Transverse colon (tissue), 4 donors: ENCODE measurements at regions of chr12 and their contacts with region 1.

Region 1: DNA sequence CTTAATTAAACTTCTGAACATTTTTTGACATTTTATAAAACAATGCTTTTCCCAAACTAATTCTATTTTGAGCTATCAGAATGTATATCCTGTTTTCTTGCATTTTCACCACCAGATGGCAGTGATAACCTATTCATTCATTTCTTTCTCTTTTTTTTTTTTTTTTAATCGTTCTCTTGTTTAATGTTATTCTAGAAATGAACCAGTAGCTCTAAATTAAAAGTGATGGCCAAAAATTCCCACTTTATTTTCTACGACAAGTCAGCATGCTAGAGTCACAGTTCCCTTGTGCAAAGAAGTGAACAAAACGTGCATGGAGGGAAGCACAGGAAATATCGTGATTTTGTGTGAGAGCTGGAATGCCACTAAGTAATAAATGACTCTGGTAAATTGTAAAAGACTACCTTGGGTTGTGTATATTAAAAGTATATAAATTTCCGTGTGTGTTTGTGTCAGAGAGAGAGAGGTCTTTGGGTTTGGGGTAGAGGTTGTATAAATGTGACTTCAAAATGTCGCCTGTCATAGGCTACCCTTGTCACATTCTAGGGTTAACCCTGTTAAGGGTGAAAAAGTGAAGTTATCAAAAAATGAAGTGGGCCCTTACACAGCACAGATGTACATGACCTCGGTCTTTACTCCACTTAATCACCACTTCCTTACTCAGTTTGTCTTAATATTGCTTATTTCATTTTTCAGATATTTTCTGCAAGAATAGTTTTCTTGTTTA is 40.4 kb upstream of the LDHB start:
- DNase-seq: no peak
- H3K4me3 ChIP-seq: no peak overlapping the region
- H3K27ac ChIP-seq: no peak overlapping the region
- H3K4me1 ChIP-seq: peaks cover 0 to 5% (median 2%) of the 10 kb centered on the region in 4 donors
- H3K27me3 ChIP-seq: no peaks in the 10 kb centered on the region
- CTCF ChIP-seq: peak; percentile 62 to 76 (median 72)
- EP300 ChIP-seq: no peak
- POLR2A ChIP-seq: no peak

Region 2: GRCh38 chr12:21989819-21990412 is 291.8 kb after region 1 on chr12:
- in situ Hi-C with region 1: loop called in 1 of 4 experiments (anchors 10 kb)
- intact Hi-C with region 1: loop called (anchors 10 kb)
- DNase-seq: no peak
- H3K4me3 ChIP-seq: no peak overlapping the region
- H3K27ac ChIP-seq: no peak overlapping the region
- H3K4me1 ChIP-seq: peaks cover 0 to 7% (median 1%) of the 10 kb centered on the region in 4 donors
- H3K27me3 ChIP-seq: no peaks in the 10 kb centered on the region
- CTCF ChIP-seq: peak; percentile 30 to 57 (median 47)
- EP300 ChIP-seq: no peak
- POLR2A ChIP-seq: no peak

Region 3: GRCh38 chr12:22002430-22002829 is 304.4 kb after region 1 on chr12:
- in situ Hi-C with region 1: loop called in 2 of 4 experiments (anchors 10 kb)
- intact Hi-C with region 1: no loop called
- DNase-seq: no peak
- H3K4me3 ChIP-seq: no peak overlapping the region
- H3K27ac ChIP-seq: no peak overlapping the region
- H3K4me1 ChIP-seq: no peaks in the 10 kb centered on the region
- H3K27me3 ChIP-seq: no peaks in the 10 kb centered on the region
- CTCF ChIP-seq: no peak
- EP300 ChIP-seq: no peak
- POLR2A ChIP-seq: no peak

Region 4: DNA sequence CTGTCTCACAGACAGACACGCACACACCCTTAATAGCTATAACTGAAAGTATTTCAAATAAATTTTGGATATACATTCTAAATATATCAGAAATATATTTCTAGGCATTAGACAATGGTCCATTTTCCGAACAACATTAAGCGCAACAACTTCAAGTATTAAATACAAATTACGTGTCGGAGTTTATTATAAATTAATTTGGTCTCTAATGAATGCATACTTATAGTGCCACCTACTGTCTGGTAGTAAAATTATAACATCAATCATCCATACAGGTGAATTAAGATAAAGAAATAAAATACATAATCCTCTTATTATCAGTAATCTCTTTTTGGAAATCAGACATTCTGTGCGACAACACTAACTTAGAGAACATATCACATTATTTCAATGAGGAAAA is 320.8 kb after region 1 on chr12:
- in situ Hi-C with region 1: loop called in 2 of 4 experiments (anchors 10 kb)
- intact Hi-C with region 1: loop called (anchors 10 kb)
- DNase-seq: no peak
- H3K4me3 ChIP-seq: no peak overlapping the region
- H3K27ac ChIP-seq: no peak overlapping the region
- H3K4me1 ChIP-seq: no peaks in the 10 kb centered on the region
- H3K27me3 ChIP-seq: no peaks in the 10 kb centered on the region
- CTCF ChIP-seq: peak; percentile 30 to 45 (median 36)
- EP300 ChIP-seq: no peak
- POLR2A ChIP-seq: no peak

Region 5: DNA sequence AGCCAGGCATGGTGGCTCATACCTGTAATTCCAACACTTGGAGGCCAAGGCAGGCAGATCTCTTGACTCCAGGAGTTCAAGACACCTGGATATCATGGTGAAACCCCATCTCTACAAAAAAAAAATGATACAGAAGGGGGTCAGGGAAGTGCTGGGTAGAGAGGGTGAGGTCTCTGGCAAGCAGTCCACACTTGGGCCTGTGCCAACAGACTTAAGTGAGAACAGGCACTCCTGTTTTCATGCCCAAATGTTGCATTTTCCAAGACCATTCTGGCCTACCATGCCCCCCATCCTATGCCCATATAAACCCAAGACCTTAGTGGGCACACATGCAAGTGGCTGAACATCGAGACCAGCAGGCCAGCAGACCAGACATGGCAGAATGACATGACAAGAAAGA is 331.9 kb after region 1 on chr12:
- in situ Hi-C with region 1: loop called in 1 of 4 experiments (anchors 10 kb)
- intact Hi-C with region 1: no loop called
- DNase-seq: no peak
- H3K4me3 ChIP-seq: no peak overlapping the region
- H3K27ac ChIP-seq: no peak overlapping the region
- H3K4me1 ChIP-seq: peaks cover 0 to 11% (median 8%) of the 10 kb centered on the region in 4 donors
- H3K27me3 ChIP-seq: no peaks in the 10 kb centered on the region
- CTCF ChIP-seq: no peak
- EP300 ChIP-seq: no peak
- POLR2A ChIP-seq: no peak

Region 6: DNA sequence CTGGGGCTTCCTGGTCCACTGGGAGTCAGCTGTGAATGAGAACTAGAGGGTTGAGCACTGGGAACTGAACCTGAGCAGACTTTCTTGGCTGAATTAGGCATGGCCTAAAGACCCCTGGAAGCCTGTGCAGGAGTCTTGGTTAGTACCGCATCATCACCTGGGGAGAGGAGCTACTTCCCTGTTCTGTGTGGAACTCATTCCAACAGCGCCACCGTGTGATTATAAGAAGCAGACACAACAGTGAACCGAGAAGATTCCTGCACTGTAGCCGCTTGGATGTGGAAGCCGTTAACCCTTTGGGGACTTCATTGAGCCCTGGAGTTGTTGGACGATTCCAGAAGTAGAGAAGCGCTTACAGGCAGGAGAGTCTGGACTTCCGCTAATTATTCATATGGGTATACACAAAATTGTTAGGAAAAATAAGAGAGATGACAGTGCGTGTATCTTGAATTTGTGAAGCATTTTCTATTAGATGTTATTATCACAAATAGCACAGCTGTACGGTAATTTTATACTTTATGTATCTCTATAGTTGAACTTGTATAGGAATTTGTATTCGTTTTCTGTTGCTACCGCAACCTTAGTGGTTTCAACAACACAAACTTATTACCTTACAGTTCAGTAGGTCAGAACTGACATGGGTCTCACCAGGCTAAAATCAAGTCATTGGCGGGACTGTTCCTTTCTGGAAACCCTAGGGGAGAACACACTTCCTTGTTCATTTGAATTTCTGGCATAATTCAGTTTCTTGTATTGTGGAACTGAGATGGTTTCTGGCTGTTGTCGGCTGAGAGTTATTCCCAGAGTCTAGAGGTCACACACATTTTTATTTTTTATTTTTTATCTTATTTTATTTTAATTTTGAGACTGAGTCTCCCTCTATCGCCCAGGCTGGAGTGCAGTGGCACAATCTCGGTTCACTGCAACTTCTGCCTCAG is 745.6 kb after region 1 on chr12:
- in situ Hi-C with region 1: loop called in 1 of 4 experiments (anchors 25 kb)
- intact Hi-C with region 1: no loop called
- DNase-seq: peak; percentile 54
- H3K4me3 ChIP-seq: no peak overlapping the region
- H3K27ac ChIP-seq: no peak overlapping the region
- H3K4me1 ChIP-seq: no peaks in the 10 kb centered on the region
- H3K27me3 ChIP-seq: no peaks in the 10 kb centered on the region
- CTCF ChIP-seq: peak; percentile 66 to 79 (median 73)
- EP300 ChIP-seq: no peak
- POLR2A ChIP-seq: no peak

Region 7: DNA sequence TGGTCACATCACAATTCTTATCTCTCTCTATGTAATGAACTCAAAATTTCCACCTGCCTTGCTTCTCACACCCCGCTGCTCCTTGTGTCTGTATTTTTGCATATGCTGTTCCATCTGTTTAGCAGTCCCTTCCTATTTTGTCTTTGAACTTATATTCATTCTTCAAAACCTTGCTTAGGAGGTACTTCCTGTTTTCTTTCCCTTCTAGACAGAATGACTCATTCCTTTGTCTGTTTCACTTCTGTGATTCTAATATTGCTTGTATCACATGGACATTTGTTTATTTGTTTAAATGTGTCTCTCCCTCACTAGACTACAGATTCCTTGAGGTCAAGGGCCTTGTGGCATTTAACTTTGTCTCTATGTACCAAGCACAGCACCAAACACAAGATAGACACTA is 1351.1 kb after region 1 on chr12:
- in situ Hi-C with region 1: no loop called
- intact Hi-C with region 1: no loop called
- DNase-seq: no peak
- H3K4me3 ChIP-seq: no peak overlapping the region
- H3K27ac ChIP-seq: no peak overlapping the region
- H3K4me1 ChIP-seq: no peaks in the 10 kb centered on the region
- H3K27me3 ChIP-seq: no peaks in the 10 kb centered on the region
- CTCF ChIP-seq: no peak
- EP300 ChIP-seq: no peak
- POLR2A ChIP-seq: no peak